PC-9 (cell line): ENCODE measurements at regions of chr6 and their contacts with region 1.

Region 1: GRCh38 chr6:28474441-28475219 is 31.3 kb upstream of the ZSCAN23 start:
- DNase-seq: peak; percentile 43 to 74
- H3K4me3 ChIP-seq: peak overlapping the region; percentile 77
- H3K27ac ChIP-seq: no peak overlapping the region
- H3K4me1 ChIP-seq: no peaks in the 10 kb centered on the region
- H3K27me3 ChIP-seq: no peaks in the 10 kb centered on the region
- CTCF ChIP-seq: no peak

Region 2: DNA sequence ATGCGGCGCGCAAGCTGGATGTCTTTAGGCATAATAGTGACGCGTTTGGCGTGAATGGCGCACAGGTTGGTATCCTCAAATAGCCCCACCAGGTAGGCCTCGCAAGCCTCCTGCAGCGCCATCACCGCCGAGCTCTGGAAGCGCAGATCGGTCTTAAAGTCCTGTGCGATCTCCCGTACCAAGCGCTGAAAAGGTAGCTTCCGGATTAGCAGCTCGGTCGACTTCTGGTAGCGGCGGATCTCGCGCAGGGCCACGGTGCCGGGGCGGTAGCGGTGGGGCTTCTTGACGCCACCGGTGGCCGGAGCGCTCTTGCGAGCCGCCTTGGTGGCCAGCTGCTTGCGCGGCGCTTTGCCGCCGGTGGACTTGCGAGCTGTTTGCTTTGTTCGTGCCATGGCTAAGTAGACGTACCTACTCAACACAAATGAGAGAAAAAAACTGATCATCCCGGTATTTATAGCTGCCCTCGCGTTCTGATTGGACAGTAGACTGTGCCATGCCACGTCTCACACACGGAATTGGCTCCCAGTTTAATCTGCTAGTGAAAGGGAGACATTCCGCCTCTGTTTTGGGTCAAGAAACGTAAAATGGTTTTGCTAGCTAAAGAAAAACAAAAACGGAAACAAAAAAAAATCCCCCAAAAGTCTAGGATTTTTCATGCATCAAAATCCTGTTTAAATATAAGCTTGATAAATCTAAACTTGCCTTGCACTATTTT is 602.5 kb before region 1 on chr6:
- CTCF ChIA-PET with region 1: no interaction called
- POLR2A ChIA-PET with region 1: interaction called, 12 read pairs
- intact Hi-C with region 1: no loop called
- DNase-seq: peak; percentile 83 to 85
- H3K4me3 ChIP-seq: peak overlapping the region; percentile 67
- H3K27ac ChIP-seq: peak overlapping the region; percentile 70
- H3K4me1 ChIP-seq: peaks cover 7% of the 10 kb centered on the region; the same call in 1 of the 2 replicates
- H3K27me3 ChIP-seq: no peaks in the 10 kb centered on the region
- CTCF ChIP-seq: peak; percentile 36; the same call in 1 of the 2 replicates

Region 3: GRCh38 chr6:28496099-28496779 is 21.6 kb after region 1 on chr6:
- CTCF ChIA-PET with region 1: no interaction called
- POLR2A ChIA-PET with region 1: no interaction called
- intact Hi-C with region 1: no loop called
- DNase-seq: no peak
- H3K4me3 ChIP-seq: no peak overlapping the region
- H3K27ac ChIP-seq: no peak overlapping the region
- H3K4me1 ChIP-seq: peaks cover 20% of the 10 kb centered on the region
- H3K27me3 ChIP-seq: no peaks in the 10 kb centered on the region
- CTCF ChIP-seq: peak; percentile 41; the same call in 1 of the 2 replicates

Region 4: DNA sequence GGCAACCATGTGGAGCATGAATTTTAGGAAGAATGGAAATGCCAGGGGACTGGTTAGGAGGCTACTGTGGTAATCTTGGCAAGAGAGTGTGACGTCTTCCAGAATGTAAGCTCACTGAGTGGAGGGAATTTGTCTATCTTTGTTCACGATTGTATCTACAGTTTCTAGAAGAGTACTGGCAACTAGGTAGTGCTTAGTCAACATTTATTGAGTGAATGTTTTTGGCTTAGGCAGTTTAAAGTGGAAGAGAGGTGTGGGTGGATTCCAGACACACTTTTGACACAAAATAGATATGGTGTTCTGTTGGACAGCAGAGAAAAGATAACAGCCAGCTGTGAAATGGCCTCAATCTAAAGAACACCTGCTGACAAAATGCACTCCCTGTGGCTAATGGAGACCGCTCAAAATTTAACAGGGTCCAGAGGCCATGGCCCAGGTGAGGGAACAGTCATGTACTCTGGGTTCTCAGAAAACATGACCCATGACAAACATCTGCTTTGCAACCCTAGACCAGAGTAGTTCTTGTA is 190.3 kb after region 1 on chr6:
- CTCF ChIA-PET with region 1: interaction called, 14 read pairs
- POLR2A ChIA-PET with region 1: no interaction called
- intact Hi-C with region 1: no loop called
- DNase-seq: no peak
- H3K4me3 ChIP-seq: no peak overlapping the region
- H3K27ac ChIP-seq: no peak overlapping the region
- H3K4me1 ChIP-seq: no peaks in the 10 kb centered on the region
- H3K27me3 ChIP-seq: no peaks in the 10 kb centered on the region
- CTCF ChIP-seq: no peak